ENCODE measurements at regions of chr18 and their contacts with region 1.

Region 1: GRCh38 chr18:47204908-47205522 is 28.9 kb upstream of the IER3IP1 start:
- DNase-seq: peak; percentile 65
- ATAC-seq: peak; percentile 78
- H3K4me3 Mint-ChIP-seq: no peak overlapping the region
- H3K27ac Mint-ChIP-seq: no peak overlapping the region
- H3K4me1 Mint-ChIP-seq: peaks cover 12% of the 10 kb centered on the region
- H3K27me3 Mint-ChIP-seq: no peaks in the 10 kb centered on the region
- CTCF ChIP-seq: peak; percentile 54

Region 2: GRCh38 chr18:47050468-47050867 is 154.5 kb before region 1 on chr18:
- CTCF ChIA-PET with region 1: interaction called, 17 read pairs
- POLR2A ChIA-PET with region 1: no interaction called
- DNase-seq: no peak
- ATAC-seq: peak; percentile 22; the same call in 1 of the 2 replicates
- H3K4me3 Mint-ChIP-seq: no peak overlapping the region
- H3K27ac Mint-ChIP-seq: no peak overlapping the region
- H3K4me1 Mint-ChIP-seq: no peaks in the 10 kb centered on the region
- H3K27me3 Mint-ChIP-seq: no peaks in the 10 kb centered on the region
- CTCF ChIP-seq: no peak

Region 3: DNA sequence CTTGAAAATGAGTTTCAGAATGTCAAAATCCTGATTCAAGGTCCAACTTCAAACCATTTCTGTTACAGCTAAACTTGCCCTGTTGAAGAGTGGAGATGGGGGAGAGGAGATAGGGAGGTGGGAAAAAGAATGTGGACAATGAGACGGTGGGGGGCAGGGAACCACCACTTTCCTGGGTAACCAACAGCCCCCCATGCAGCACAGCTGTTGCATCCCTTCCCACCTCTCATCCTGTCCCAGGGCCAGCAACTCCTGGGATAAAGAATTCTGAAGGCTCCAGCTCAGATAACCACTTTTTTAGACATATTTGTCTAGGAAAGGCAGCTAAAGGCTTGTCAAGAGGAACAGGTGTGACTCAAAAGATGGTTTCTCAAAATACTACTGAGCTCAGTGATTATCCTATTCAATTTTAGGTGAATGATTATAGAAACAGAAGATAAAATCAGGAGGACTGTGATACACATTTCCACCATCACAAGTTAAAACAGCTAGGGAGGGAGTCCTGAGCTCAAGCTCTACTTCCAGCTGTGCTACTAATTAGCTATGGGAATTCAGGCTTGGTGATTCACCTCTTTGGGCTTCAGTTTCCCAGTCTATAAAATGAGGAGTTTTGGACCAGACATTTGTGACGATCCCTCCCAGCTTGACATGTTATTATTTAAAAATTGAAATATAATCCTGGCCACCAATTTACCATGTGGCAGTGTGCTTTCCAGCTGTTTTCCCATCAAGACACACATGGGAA is 91.0 kb before region 1 on chr18:
- CTCF ChIA-PET with region 1: interaction called, 38 read pairs
- POLR2A ChIA-PET with region 1: no interaction called
- DNase-seq: no peak
- ATAC-seq: peak; percentile 71
- H3K4me3 Mint-ChIP-seq: no peak overlapping the region
- H3K27ac Mint-ChIP-seq: 0 out of 2 replicates have a peak overlapping the region, but pooled peaks have one; percentile 35
- H3K4me1 Mint-ChIP-seq: peaks cover 39% of the 10 kb centered on the region
- H3K27me3 Mint-ChIP-seq: no peaks in the 10 kb centered on the region
- CTCF ChIP-seq: no peak

Region 4: DNA sequence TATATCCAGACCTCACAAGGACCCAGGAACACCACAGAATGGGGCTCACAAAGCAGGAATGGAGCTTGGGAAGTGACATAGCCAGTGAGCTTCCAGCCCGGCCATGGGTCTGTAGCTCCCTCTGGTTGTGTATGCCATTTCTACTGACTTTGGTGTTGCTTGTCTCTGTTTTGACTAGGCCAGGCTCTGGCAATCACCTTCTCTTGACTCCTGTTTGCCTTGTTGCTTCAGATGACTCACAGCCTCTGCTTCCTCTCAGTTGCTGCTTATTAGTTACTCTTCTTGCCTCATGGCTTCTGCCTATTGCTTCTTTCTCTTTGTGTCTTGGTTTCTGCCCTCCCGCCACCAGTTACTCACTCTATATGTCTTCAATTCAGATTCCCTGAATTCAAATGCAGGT is 13.1 kb before region 1 on chr18:
- CTCF ChIA-PET with region 1: interaction called, 20 read pairs
- POLR2A ChIA-PET with region 1: no interaction called
- DNase-seq: no peak
- ATAC-seq: no peak
- H3K4me3 Mint-ChIP-seq: no peak overlapping the region
- H3K27ac Mint-ChIP-seq: no peak overlapping the region
- H3K4me1 Mint-ChIP-seq: no peaks in the 10 kb centered on the region
- H3K27me3 Mint-ChIP-seq: peaks cover 6% of the 10 kb centered on the region
- CTCF ChIP-seq: no peak

Region 5: DNA sequence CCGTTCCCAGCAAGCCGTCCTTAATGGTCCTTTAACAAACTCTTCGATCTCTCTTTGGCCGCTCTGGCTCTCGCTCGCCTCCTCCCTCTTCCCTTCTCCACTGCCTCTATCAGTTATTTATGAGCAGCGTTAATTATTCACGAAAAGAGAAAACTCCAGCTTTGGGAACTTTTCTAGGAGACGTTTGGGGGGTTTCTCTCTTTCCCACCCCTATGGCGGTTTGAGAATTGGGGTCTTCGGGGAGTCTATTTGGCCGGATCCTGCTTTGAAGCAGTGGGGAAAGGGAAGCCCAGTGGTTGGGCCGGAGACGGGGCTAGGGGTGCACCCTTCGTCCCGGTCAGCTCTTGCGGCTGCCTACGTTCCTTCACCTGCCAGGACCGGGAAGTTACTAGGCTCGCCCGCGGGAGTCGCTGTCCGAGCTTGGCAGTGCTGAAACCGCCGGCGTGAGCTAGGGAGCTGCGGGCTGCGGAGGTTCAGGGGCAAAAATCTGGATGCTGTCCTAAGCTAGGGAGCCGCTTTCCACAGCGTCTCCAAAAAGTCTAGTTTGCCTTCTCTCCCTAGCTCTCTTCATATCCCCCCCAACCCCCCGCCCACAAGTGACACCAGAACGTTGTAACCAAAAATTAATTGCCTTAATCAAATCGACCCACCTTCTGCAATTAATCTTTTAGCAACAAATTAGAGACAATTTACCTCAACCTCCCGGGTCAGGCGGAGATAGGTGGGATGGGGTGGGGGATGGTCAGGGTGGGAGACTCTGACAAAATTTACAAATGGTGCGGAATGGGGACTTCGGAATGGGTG is 55.3 kb after region 1 on chr18:
- CTCF ChIA-PET with region 1: interaction called, 17 read pairs
- POLR2A ChIA-PET with region 1: no interaction called
- DNase-seq: peak; percentile 93
- ATAC-seq: peak; percentile 40
- H3K4me3 Mint-ChIP-seq: peak overlapping the region; percentile 54
- H3K27ac Mint-ChIP-seq: no peak overlapping the region
- H3K4me1 Mint-ChIP-seq: peaks cover 48% of the 10 kb centered on the region
- H3K27me3 Mint-ChIP-seq: peaks cover 100% of the 10 kb centered on the region
- CTCF ChIP-seq: no peak